ENCODE measurements at regions of chr16 and their contacts with region 1.

Region 1: DNA sequence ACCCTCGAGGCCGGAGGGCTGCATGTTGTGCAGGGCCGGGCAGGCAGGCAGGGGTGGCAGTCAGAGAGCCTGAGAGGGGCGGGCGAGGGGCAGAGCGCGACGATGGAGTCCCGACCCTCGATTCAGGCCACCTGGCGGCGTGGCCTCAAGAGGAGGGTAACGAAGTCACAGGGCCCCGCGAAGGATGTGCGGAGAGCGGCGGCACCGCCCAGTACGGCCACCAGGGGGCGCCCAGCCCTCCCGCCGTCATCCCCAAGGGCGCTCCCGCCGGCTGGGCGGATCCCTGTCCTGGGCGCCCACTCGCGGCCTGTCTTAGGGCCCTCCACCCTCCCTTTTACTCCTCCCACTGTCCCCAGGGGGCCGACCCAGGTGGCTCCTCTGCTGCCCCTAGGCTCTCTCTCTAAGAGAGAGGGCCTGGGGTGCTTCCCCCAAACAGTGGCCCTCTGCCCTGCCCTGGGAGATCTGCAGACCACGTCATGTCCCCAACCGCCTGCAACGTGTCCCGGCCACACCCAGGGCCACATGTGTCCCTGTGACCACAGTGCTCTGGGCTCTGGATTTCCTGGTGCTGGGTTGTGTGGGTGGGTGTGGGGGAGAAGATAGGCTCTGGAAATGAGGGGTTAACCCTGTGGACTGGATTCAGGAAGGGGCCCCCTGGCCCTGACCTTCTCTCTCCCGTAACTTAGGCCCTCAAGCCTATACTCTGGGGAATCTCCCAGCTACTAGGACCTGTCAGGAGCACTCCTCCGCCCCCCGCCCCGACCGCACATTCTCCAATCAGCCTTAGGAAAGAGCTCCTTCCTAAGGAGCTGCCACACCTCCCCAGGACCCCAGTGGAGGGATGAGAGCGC is 5.9 kb downstream of the DPEP2 start:
- H3K4me3 Mint-ChIP-seq: peak overlapping the region; percentile 82
- H3K27ac Mint-ChIP-seq: peak overlapping the region; percentile 99
- H3K4me1 Mint-ChIP-seq: peaks cover 69% of the 10 kb centered on the region
- H3K27me3 Mint-ChIP-seq: no peaks in the 10 kb centered on the region

Region 2: GRCh38 chr16:67951485-67951884 is 41.9 kb before region 1 on chr16:
- intact Hi-C with region 1: no loop called
- H3K4me3 Mint-ChIP-seq: no peak overlapping the region
- H3K27ac Mint-ChIP-seq: no peak overlapping the region
- H3K4me1 Mint-ChIP-seq: no peaks in the 10 kb centered on the region
- H3K27me3 Mint-ChIP-seq: no peaks in the 10 kb centered on the region

Region 3: DNA sequence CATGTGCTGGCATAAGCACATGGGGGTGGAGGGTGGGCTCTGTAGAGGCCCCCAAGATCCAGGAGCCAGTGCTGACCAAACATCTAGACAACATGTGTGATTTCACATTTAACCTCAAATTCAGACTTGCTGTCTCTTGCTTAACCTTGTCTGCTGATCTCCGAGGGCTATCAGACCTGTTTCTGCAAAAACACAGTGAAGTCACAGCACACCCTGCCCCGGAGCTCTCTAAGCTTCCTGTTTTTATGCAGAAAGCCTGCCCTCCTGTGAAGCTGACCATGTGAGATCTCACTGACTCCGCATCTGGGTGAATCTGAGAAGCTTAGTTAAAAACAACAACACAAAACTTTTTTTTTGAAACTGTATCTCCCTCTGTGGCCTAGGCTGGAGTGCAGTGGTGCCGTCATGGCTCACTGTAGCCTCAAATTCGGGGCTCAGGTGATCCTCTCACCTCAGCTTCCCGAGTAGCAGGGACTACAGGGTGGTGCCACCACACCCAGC is 12.4 kb after region 1 on chr16:
- intact Hi-C with region 1: loop called (anchors 2 kb)
- H3K4me3 Mint-ChIP-seq: peak overlapping the region; percentile 44
- H3K27ac Mint-ChIP-seq: peak overlapping the region; percentile 98
- H3K4me1 Mint-ChIP-seq: peaks cover 53% of the 10 kb centered on the region
- H3K27me3 Mint-ChIP-seq: no peaks in the 10 kb centered on the region

Region 4: DNA sequence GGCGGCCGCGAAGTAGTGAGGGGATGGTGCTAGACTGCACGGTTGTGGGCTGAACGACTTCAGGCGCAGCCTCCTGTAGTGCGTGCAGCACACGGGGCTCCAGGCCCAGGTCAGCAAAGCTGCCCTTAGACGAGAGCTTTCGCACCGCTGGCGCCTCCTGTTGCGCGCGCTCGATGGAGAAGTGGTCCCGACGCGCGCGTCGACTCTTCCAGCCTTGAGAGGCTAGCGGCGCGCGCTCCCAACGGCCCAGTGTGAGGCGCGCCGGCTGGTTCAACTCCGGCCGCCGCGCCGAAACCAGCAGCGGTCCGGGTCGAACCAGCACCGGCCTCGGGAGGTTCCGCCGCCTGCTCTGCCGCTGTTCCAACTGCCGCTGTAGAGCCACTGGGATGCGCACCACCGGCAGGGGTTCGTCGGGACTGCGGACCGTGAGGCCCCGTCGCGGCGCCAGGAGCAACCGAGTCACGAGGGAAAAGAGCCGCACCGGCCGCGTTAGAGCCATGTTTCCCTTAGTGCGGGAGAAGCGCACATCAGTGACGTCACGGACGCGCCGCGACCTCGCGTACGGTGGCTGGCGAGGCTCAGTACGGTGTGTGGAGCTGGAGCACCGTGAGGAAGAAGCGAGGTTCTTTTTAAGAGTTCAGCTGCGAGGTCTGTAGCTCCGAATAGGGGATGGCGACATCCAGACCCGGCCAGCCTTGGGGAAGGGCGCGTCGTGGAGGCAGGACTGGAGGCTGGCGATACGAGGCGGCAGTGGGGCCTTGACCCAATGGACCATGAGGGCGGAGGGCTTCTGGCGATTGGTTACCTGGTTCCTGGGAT is 29.5 kb after region 1 on chr16 and contains the starts of genes DDX28 and DUS2:
- intact Hi-C with region 1: loop called (anchors 1 kb)
- H3K4me3 Mint-ChIP-seq: peak within 1 kb of the TSS; percentile 90
- H3K27ac Mint-ChIP-seq: peak within 1 kb of the TSS; percentile 92
- H3K4me1 Mint-ChIP-seq: peaks cover 27% of the 10 kb centered on the region
- H3K27me3 Mint-ChIP-seq: no peaks in the 10 kb centered on the region

Region 5: GRCh38 chr16:68040507-68041288 is 47.3 kb after region 1 on chr16:
- intact Hi-C with region 1: loop called (anchors 1 kb)
- H3K4me3 Mint-ChIP-seq: no peak overlapping the region
- H3K27ac Mint-ChIP-seq: peak overlapping the region; percentile 62
- H3K4me1 Mint-ChIP-seq: peaks cover 53% of the 10 kb centered on the region
- H3K27me3 Mint-ChIP-seq: no peaks in the 10 kb centered on the region

Measured in dendritic cell treated with granulocyte-macrophage colony-stimulating factor and Interleukin-4, amounts not matched to agents 40 ng/mL and 50 ng/mL, for 4 days (primary cell).